Dorsolateral prefrontal cortex (tissue), 120 donors: ENCODE measurements at regions of chr7 and their contacts with region 1.

Region 1: GRCh38 chr7:71594746-71595145 is 462.8 kb downstream of the GALNT17 start:
- DNase-seq: no peak
- H3K4me3 ChIP-seq: no peak overlapping the region
- H3K27ac ChIP-seq: no peak overlapping the region
- H3K27me3 ChIP-seq: no peaks in the 10 kb centered on the region
- CTCF ChIP-seq: no peak

Region 2: DNA sequence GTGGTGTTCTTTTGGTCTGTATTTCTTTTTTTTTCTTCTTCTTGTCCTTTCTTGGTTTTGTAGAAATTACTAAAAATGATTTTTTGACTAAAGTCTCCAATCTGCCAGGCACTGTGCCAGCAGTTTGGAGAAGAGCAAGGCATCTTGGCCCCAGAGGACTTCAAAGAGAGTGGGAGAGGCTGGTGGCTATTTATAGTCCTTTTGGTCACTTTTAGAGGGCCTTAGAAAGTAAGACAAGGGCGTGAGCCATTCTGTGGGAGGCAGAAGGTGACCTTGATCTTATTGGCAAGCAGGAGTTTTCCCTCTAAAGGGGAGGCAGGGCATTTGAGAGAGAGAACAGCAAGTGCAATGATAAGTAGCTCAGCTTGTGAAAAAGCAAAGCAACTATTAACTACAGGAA is 250.9 kb before region 1 on chr7:
- intact Hi-C with region 1: no loop called
- DNase-seq: no peak
- H3K4me3 ChIP-seq: no peak overlapping the region
- H3K27ac ChIP-seq: peak overlapping the region in 5 of 59 donors; percentile 25 to 60 (median 34)
- H3K27me3 ChIP-seq: peaks cover 0 to 3% (median 0%) of the 10 kb centered on the region in 45 donors
- CTCF ChIP-seq: no peak

Region 3: DNA sequence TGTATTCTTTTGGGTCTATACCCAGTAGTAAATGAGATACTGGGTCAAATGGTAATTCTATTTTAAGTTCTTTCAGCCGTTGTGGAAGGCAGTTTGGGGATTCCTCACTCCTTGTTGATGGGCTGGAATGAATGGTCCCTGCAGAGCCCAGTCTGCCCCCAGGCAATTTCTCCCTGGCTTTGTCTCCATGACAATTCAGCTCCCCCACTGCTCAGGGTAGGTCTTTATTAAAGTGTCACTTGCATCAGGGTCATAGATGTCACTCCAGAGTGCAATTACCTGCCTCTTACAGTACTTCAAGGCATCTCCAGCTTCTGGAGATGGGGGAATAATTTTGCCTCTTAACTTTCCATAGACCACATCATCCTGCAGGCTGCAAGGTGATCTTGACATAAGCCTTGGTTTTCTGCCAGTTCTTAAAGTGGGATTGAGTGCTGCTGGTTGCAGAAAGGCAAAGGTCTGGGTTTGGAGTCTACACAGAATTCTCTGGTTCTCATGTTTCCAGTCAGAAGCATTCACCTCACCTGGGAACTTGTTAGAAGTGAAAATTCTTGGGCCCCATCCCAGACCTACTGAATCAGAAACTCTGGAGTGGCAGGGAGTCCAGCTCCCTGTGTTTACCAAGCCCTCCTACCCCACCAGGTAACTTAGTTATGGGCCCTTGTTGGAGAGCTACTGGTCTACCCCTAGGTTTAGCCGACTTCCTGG is 20.4 kb before region 1 on chr7:
- intact Hi-C with region 1: no loop called
- DNase-seq: no peak
- H3K4me3 ChIP-seq: no peak overlapping the region
- H3K27ac ChIP-seq: no peak overlapping the region
- H3K27me3 ChIP-seq: no peaks in the 10 kb centered on the region
- CTCF ChIP-seq: no peak

Region 4: DNA sequence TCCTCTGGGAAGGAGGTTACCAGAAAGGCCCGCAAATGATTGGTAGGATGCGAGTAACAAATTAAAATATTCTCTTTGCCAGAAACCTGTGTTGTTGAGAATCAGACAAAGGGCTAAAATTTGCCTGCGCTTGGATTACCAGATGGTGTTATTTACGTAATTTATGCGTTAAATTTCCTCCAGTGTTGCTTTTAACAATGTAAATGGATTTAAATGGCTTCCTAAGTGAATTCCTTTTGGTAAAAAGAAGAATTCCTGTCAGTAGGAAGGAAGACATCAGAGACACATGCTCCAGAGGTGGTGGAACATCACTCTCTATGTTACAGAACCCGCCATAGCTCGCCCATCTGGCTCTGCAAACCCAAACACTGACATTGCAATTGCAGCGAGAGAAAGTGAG is 57.8 kb after region 1 on chr7:
- intact Hi-C with region 1: loop called in 1 of 2 experiments (anchors 10 kb)
- DNase-seq: no peak
- H3K4me3 ChIP-seq: no peak overlapping the region
- H3K27ac ChIP-seq: peak overlapping the region in 2 of 59 donors; percentile 8 to 16
- H3K27me3 ChIP-seq: no peaks in the 10 kb centered on the region
- CTCF ChIP-seq: no peak